HepG2 (cell line): ENCODE measurements at regions of chr10 and their contacts with region 1.

Region 1: DNA sequence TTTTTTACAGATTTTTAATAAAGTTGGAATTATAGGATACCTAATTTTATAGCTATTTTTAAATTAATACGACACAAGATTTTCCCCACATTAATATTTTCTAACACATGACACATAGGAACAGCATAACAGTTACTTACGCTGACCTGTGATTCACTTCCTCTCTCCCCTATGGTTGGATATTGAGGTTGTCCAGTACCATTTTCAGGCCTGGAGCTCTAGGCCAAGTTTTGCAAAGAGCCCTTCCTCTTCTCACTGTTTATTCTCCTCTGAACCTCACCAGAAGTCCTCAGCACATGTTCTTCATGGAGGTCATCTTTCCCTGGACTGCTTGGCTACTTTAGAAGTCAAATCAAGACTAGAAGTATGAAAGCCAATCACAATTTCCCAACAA is 28.2 kb downstream of the LYZL1 start:
- DNase-seq: no peak
- ATAC-seq: no peak
- H3K4me3 ChIP-seq: peak overlapping the region in 1 of 3 experiments; percentile 70; a peak in 1 of 6 replicates
- H3K27ac ChIP-seq: peak overlapping the region; percentile 98
- H3K4me1 ChIP-seq: peaks cover 62% of the 10 kb centered on the region
- H3K27me3 ChIP-seq: no peaks in the 10 kb centered on the region
- CTCF ChIP-seq: no peak
- EP300 ChIP-seq: no peak
- POLR2A ChIP-seq: no peak
- RAD21 ChIP-seq: no peak

Region 2: DNA sequence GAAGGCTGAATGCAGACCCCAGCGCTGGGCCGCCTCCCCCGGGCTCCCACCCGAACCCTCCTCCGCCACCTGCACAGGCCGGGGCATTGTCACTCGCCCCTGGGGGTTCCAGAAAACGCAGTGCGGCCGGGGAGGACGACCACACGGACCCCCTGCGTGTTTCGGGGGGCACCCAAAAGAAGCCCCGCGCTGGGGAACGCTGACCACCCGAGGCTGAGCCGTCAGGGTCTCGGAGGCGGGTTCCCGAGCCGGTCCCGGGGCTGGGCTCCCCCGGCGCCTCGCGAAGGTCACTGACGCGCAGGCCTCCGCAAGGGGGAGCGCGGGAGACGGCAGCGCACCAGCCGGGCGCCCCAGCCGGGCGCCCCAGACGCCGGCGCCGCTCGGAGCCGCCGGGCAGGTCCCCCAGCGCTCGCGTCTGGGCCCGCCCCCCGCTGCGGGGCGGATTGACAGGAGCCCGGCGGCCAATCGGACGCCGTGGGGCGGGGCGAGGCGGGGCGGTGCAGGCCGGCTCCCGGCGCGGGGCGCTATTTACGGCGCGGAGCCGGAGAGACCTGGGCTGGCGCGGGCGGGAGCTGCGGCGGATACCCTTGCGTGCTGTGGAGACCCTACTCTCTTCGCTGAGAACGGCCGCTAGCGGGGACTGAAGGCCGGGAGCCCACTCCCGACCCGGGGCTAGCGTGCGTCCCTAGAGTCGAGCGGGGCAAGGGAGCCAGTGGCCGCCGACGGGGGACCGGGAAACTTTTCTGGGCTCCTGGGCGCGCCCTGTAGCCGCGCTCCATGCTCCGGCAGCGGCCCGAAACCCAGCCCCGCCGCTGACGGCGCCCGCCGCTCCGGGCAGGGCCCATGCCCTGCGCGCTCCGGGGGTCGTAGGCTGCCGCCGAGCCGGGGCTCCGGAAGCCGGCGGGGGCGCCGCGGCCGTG is 639.8 kb before region 1 on chr10 and contains the start of gene BAMBI:
- CTCF ChIA-PET with region 1: no interaction called
- POLR2A ChIA-PET with region 1: no interaction called
- in situ Hi-C with region 1: no loop called
- intact Hi-C with region 1: loop called (anchors 5 kb)
- DNase-seq: peak; percentile 81
- ATAC-seq: peak; percentile 93
- H3K4me3 ChIP-seq: peak within 1 kb of the TSS; percentile 93 to 99 (median 99)
- H3K27ac ChIP-seq: peak within 1 kb of the TSS; percentile 71
- H3K4me1 ChIP-seq: peaks cover 30% of the 10 kb centered on the region
- H3K27me3 ChIP-seq: peaks cover 0 to 31% of the 10 kb centered on the region in 2 experiments; a peak in 4 of 5 replicates
- CTCF ChIP-seq: peak; percentile 73
- EP300 ChIP-seq: peak in 1 of 2 experiments; percentile 5; a peak in 1 of 4 replicates
- POLR2A ChIP-seq: peak; percentile 97 to 98
- RAD21 ChIP-seq: peak; percentile 97
- total RNA-seq, gene BAMBI: 13.2 and 23.6 TPM in 2 replicates

Region 3: GRCh38 chr10:29304264-29305030 is 12.6 kb before region 1 on chr10:
- CTCF ChIA-PET with region 1: no interaction called
- POLR2A ChIA-PET with region 1: interaction called, 15 read pairs
- in situ Hi-C with region 1: no loop called
- intact Hi-C with region 1: no loop called
- DNase-seq: peak; percentile 68
- ATAC-seq: peak; percentile 82
- H3K4me3 ChIP-seq: peak overlapping the region in 2 of 3 experiments; percentile 27 to 46; a peak in 3 of 6 replicates
- H3K27ac ChIP-seq: no peak overlapping the region
- H3K4me1 ChIP-seq: peaks cover 10% of the 10 kb centered on the region; the same call in 1 of the 2 replicates
- H3K27me3 ChIP-seq: no peaks in the 10 kb centered on the region
- CTCF ChIP-seq: peak; percentile 86
- EP300 ChIP-seq: no peak
- POLR2A ChIP-seq: no peak
- RAD21 ChIP-seq: peak; percentile 84

Region 4: GRCh38 chr10:29353305-29353704 is 36.3 kb after region 1 on chr10:
- CTCF ChIA-PET with region 1: no interaction called
- POLR2A ChIA-PET with region 1: interaction called, 11 read pairs
- in situ Hi-C with region 1: no loop called
- intact Hi-C with region 1: loop called (anchors 5 kb)
- DNase-seq: no peak
- ATAC-seq: no peak
- H3K4me3 ChIP-seq: no peak overlapping the region
- H3K27ac ChIP-seq: peak overlapping the region; percentile 52
- H3K4me1 ChIP-seq: peaks cover 86% of the 10 kb centered on the region
- H3K27me3 ChIP-seq: no peaks in the 10 kb centered on the region
- CTCF ChIP-seq: no peak
- EP300 ChIP-seq: no peak
- POLR2A ChIP-seq: no peak
- RAD21 ChIP-seq: no peak

Region 5: GRCh38 chr10:29470355-29470705 is 153.3 kb after region 1 on chr10:
- CTCF ChIA-PET with region 1: no interaction called
- POLR2A ChIA-PET with region 1: no interaction called
- in situ Hi-C with region 1: no loop called
- intact Hi-C with region 1: no loop called
- DNase-seq: no peak
- ATAC-seq: peak; percentile 74
- H3K4me3 ChIP-seq: no peak overlapping the region
- H3K27ac ChIP-seq: no peak overlapping the region
- H3K4me1 ChIP-seq: no peaks in the 10 kb centered on the region
- H3K27me3 ChIP-seq: no peaks in the 10 kb centered on the region
- CTCF ChIP-seq: peak; percentile 71
- EP300 ChIP-seq: no peak
- POLR2A ChIP-seq: no peak
- RAD21 ChIP-seq: peak; percentile 20; the same call in 1 of the 2 replicates

Region 6: DNA sequence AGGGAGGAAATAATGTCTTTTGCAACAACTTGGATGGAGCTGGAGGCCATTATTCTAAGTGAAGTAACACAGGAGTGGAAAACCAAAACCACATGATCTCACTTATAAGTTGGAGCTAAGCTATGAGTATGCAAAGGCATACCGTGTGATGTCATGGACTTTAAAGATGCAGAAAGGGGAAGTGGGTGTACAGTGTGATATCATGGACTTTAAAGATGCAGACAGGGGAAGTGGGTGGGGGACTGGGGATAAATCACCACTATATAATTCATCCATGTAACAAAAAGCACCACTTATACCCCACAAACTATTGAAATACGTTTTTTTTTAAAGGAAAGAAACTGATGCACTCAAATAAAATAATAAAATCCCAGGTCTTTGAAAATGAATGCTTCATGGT is 1283.0 kb after region 1 on chr10:
- CTCF ChIA-PET with region 1: no interaction called
- POLR2A ChIA-PET with region 1: no interaction called
- in situ Hi-C with region 1: loop called (anchors 10 kb)
- intact Hi-C with region 1: no loop called
- DNase-seq: no peak
- ATAC-seq: no peak
- H3K4me3 ChIP-seq: no peak overlapping the region
- H3K27ac ChIP-seq: no peak overlapping the region
- H3K4me1 ChIP-seq: peaks cover 69% of the 10 kb centered on the region
- H3K27me3 ChIP-seq: no peaks in the 10 kb centered on the region
- CTCF ChIP-seq: no peak
- EP300 ChIP-seq: no peak
- POLR2A ChIP-seq: no peak
- RAD21 ChIP-seq: no peak